CD4-positive, alpha-beta memory T cell (primary cell): ENCODE measurements at regions of chr20 and their contacts with region 1.

Region 1: DNA sequence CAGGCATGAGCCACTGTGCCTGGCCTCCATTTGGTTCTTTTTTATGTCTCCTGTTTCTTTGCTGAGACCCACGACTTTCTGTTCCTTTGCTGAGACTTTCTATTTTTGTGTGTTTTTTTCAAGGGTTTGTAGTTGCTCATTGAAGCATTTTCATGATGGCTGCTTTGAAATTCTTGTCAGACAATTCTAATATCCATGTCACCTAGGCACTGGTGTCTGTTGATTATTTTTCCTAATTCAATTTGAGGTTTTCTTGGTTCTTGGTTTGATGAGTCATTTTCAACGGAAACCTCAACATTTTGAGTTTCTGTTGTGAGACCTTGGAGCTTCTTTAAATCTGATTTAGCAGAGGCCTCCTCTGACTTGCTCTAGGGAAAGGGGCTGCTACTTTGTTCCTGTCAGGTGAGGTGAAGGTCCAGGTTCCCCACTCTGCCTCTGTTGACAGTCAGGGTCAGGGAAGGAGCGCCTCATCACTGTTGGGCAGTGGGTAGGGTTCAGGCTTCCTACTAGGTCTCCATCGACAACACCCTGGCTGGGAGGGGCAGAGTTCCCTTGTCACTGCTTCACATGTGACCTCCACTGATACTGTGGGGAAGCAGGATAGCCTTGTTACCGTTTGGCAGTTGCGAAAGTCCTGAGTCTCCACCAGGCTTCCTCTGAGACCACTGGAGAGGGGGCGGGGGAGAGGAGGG is 67.2 kb upstream of the RNF24 start:
- DNase-seq: peak; percentile 64 to 79 (median 70)
- H3K4me3 ChIP-seq: peak overlapping the region in 1 of 2 donors; percentile 31
- H3K4me3 Mint-ChIP-seq: peak overlapping the region; percentile 30 to 88 (median 69)
- H3K27ac ChIP-seq: peak overlapping the region; percentile 39
- H3K27ac Mint-ChIP-seq: peak overlapping the region; percentile 83 to 97 (median 94)
- H3K4me1 ChIP-seq: peaks cover 48% of the 10 kb centered on the region
- H3K4me1 Mint-ChIP-seq: peaks cover 29 to 55% (median 42%) of the 10 kb centered on the region in 4 donors
- H3K27me3 ChIP-seq: no peaks in the 10 kb centered on the region
- H3K27me3 Mint-ChIP-seq: no peaks in the 10 kb centered on the region

Region 2: GRCh38 chr20:3786665-3787323 is 295.8 kb before region 1 on chr20 and contains the start of gene CENPB:
- CTCF ChIA-PET with region 1: interaction called, 3 read pairs
- POLR2A ChIA-PET with region 1: interaction called, 3 read pairs
- intact Hi-C with region 1: loop called (anchors 1 kb)
- DNase-seq: peak; percentile 82 to 94 (median 88)
- H3K4me3 ChIP-seq: peak within 1 kb of the TSS; percentile 29 to 38
- H3K4me3 Mint-ChIP-seq: peak within 1 kb of the TSS; percentile 74 to 87 (median 84)
- H3K27ac ChIP-seq: peak within 1 kb of the TSS; percentile 12
- H3K27ac Mint-ChIP-seq: peak within 1 kb of the TSS; percentile 79 to 93 (median 88)
- H3K4me1 ChIP-seq: peaks cover 37% of the 10 kb centered on the region
- H3K4me1 Mint-ChIP-seq: peaks cover 23 to 41% (median 33%) of the 10 kb centered on the region in 4 donors
- H3K27me3 ChIP-seq: no peaks in the 10 kb centered on the region
- H3K27me3 Mint-ChIP-seq: no peaks in the 10 kb centered on the region
- total RNA-seq, gene CENPB: 52.2 to 56.7 TPM

Region 3: GRCh38 chr20:3854462-3854871 is 228.1 kb before region 1 on chr20:
- CTCF ChIA-PET with region 1: interaction called, 7 read pairs
- POLR2A ChIA-PET with region 1: interaction called, 3 read pairs
- intact Hi-C with region 1: loop called (anchors 1 kb)
- DNase-seq: no peak
- H3K4me3 ChIP-seq: no peak overlapping the region
- H3K4me3 Mint-ChIP-seq: no peak overlapping the region
- H3K27ac ChIP-seq: no peak overlapping the region
- H3K27ac Mint-ChIP-seq: peak overlapping the region in 3 of 7 donors; percentile 22 to 62 (median 24)
- H3K4me1 ChIP-seq: peaks cover 10% of the 10 kb centered on the region
- H3K4me1 Mint-ChIP-seq: peaks cover 8 to 20% (median 9%) of the 10 kb centered on the region in 4 donors
- H3K27me3 ChIP-seq: no peaks in the 10 kb centered on the region
- H3K27me3 Mint-ChIP-seq: no peaks in the 10 kb centered on the region

Region 4: DNA sequence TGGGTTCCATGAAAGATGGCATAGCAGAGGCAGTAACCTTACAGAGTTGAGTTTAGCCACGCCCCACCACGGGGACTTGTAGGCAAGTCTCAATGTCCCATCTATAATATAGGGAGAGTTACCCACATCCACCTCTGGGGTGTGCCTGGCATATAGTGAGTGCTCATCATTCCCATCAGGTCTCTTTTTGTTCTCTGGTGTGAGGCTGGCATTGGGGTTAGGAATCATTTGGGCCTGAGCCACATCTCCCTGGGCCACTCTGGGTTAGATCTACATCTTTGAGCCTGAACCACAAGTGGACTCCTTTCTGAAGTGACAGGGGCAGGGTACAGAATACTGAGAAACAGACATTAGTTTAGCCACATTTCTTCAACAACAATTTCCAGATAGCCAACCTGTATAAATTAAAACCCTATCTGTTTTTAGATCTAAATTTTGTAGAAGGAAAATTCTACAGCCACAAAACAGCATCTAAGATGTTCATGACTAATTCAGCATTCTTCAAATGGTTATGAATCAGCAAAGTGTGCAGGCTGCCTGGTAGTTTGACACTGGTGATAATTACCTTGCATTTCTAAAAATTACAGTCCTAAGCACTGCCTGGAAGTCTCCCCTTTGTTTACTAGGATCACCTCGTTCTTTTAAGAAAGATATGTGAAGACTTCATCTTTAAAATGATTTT is 87.3 kb before region 1 on chr20:
- CTCF ChIA-PET with region 1: interaction called, 8 read pairs
- POLR2A ChIA-PET with region 1: interaction called, 10 read pairs
- intact Hi-C with region 1: no loop called
- DNase-seq: peak in 1 of 5 donors; percentile 29
- H3K4me3 ChIP-seq: no peak overlapping the region
- H3K4me3 Mint-ChIP-seq: peak overlapping the region in 5 of 8 donors; percentile 39 to 63 (median 52)
- H3K27ac ChIP-seq: no peak overlapping the region
- H3K27ac Mint-ChIP-seq: peak overlapping the region in 6 of 7 donors; percentile 33 to 81 (median 68)
- H3K4me1 ChIP-seq: peaks cover 43% of the 10 kb centered on the region
- H3K4me1 Mint-ChIP-seq: peaks cover 29 to 69% (median 45%) of the 10 kb centered on the region in 4 donors
- H3K27me3 ChIP-seq: no peaks in the 10 kb centered on the region
- H3K27me3 Mint-ChIP-seq: no peaks in the 10 kb centered on the region

Region 5: GRCh38 chr20:4038047-4038459 is 44.5 kb before region 1 on chr20:
- CTCF ChIA-PET with region 1: interaction called, 20 read pairs
- POLR2A ChIA-PET with region 1: interaction called, 29 read pairs
- intact Hi-C with region 1: loop called (anchors 2 kb)
- DNase-seq: peak; percentile 82 to 96 (median 91)
- H3K4me3 ChIP-seq: peak overlapping the region in 1 of 2 donors; percentile 37
- H3K4me3 Mint-ChIP-seq: peak overlapping the region; percentile 80 to 89 (median 86)
- H3K27ac ChIP-seq: peak overlapping the region; percentile 39
- H3K27ac Mint-ChIP-seq: peak overlapping the region; percentile 74 to 99 (median 98)
- H3K4me1 ChIP-seq: peaks cover 22% of the 10 kb centered on the region
- H3K4me1 Mint-ChIP-seq: peaks cover 11 to 23% (median 18%) of the 10 kb centered on the region in 4 donors
- H3K27me3 ChIP-seq: no peaks in the 10 kb centered on the region
- H3K27me3 Mint-ChIP-seq: no peaks in the 10 kb centered on the region

Region 6: GRCh38 chr20:4069751-4070150 is 12.8 kb before region 1 on chr20:
- CTCF ChIA-PET with region 1: interaction called, 12 read pairs
- POLR2A ChIA-PET with region 1: no interaction called
- intact Hi-C with region 1: no loop called
- DNase-seq: no peak
- H3K4me3 ChIP-seq: no peak overlapping the region
- H3K4me3 Mint-ChIP-seq: no peak overlapping the region
- H3K27ac ChIP-seq: no peak overlapping the region
- H3K27ac Mint-ChIP-seq: no peak overlapping the region
- H3K4me1 ChIP-seq: no peaks in the 10 kb centered on the region
- H3K4me1 Mint-ChIP-seq: peaks cover 0 to 2% (median 0%) of the 10 kb centered on the region in 4 donors
- H3K27me3 ChIP-seq: no peaks in the 10 kb centered on the region
- H3K27me3 Mint-ChIP-seq: no peaks in the 10 kb centered on the region

Region 7: DNA sequence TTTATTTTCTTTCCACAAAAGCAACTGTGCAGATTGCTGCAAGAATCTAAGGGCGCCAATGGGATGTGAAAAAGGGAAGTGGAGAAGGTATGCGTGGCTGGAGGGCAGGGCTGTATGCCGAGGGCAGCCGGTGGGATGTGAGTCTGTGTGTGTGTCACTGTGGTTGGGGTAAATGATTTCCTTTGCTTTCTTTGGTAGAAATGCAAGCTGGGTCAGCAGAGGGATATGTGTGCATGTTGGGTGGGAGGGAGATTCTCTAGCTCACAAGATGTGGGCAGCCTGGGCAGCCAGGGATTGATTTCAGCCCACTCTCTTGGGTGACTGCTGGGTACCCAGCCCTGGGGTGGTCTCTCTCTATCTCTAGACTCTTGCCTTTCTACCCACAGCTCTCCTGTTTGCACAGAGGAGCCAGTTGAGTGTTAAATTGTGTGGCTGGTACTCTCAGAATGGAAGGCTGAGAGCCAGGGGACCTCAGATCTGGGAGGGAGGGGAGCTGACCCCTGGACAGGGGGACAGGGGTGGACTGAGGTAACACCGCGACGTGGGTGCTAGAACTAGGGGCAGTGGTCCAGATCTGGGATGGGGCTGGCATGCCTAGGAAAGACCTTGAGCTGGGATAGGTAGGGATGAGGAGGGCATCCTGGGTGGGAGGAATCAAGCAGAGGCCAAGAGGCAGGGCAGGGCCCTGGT is 69.6 kb after region 1 on chr20:
- CTCF ChIA-PET with region 1: no interaction called
- POLR2A ChIA-PET with region 1: no interaction called
- intact Hi-C with region 1: no loop called
- DNase-seq: no peak
- H3K4me3 ChIP-seq: no peak overlapping the region
- H3K4me3 Mint-ChIP-seq: peak overlapping the region in 1 of 8 donors; percentile 40
- H3K27ac ChIP-seq: no peak overlapping the region
- H3K27ac Mint-ChIP-seq: peak overlapping the region in 1 of 7 donors; percentile 52
- H3K4me1 ChIP-seq: peaks cover 8% of the 10 kb centered on the region
- H3K4me1 Mint-ChIP-seq: peaks cover 7 to 12% (median 10%) of the 10 kb centered on the region in 4 donors
- H3K27me3 ChIP-seq: peaks cover 12% of the 10 kb centered on the region
- H3K27me3 Mint-ChIP-seq: peaks cover 20 to 37% of the 10 kb centered on the region in 2 donors